ENCODE measurements at regions of chr19 and their contacts with region 1.

Region 1: DNA sequence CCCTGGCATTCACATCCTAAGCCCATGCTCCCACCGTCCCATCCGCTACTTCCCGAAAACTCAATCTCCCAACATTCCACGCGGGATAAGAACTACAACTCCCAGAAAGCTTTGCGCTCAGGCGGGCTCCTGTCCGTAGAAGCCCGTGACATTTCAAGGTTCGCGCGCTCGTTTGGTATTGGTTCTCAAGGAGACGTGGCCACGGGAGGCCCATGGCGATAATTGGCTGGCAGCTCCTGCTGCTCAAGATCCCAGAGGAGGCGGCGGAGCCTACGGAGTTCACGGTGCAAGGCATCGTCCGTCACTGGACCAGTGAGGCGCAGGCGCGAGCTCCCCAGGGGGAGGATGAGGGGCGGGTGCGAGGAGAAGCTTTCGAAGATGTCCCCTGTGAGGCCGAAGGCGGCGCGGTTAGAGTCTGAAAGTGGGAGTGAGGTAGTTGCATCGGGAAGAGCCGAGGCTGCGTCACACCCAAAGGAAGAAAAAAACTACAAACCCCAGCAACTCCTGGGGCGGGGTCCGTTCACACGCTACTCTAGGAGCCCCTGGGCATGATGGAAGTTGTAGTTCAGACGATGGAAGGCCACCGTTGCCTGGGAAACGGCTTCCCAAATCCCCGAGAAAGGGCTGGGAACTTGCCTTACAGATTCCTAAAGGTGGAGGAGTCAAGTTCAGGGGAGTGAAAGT is 1.2 kb upstream of the MAMSTR start:
- DNase-seq: peak; percentile 81
- ATAC-seq: peak; percentile 86
- H3K4me3 Mint-ChIP-seq: peak overlapping the region; percentile 95
- H3K27ac Mint-ChIP-seq: peak overlapping the region; percentile 92
- H3K4me1 Mint-ChIP-seq: peaks cover 24% of the 10 kb centered on the region
- H3K27me3 Mint-ChIP-seq: no peaks in the 10 kb centered on the region
- CTCF ChIP-seq: no peak

Region 2: GRCh38 chr19:48674921-48675824 is 45.6 kb before region 1 on chr19:
- CTCF ChIA-PET with region 1: no interaction called
- POLR2A ChIA-PET with region 1: no interaction called
- intact Hi-C with region 1: no loop called
- DNase-seq: peak; percentile 47
- ATAC-seq: peak; percentile 96
- H3K4me3 Mint-ChIP-seq: no peak overlapping the region
- H3K27ac Mint-ChIP-seq: no peak overlapping the region
- H3K4me1 Mint-ChIP-seq: peaks cover 7% of the 10 kb centered on the region
- H3K27me3 Mint-ChIP-seq: peaks cover 1% of the 10 kb centered on the region
- CTCF ChIP-seq: peak; percentile 65

Region 3: GRCh38 chr19:48738557-48739399 is 18.0 kb after region 1 on chr19:
- CTCF ChIA-PET with region 1: no interaction called
- POLR2A ChIA-PET with region 1: interaction called, 8 read pairs
- intact Hi-C with region 1: loop called (anchors 1 kb)
- DNase-seq: peak; percentile 86
- ATAC-seq: peak; percentile 94
- H3K4me3 Mint-ChIP-seq: peak overlapping the region; percentile 66
- H3K27ac Mint-ChIP-seq: peak overlapping the region; percentile 70
- H3K4me1 Mint-ChIP-seq: peaks cover 20% of the 10 kb centered on the region
- H3K27me3 Mint-ChIP-seq: peaks cover 8% of the 10 kb centered on the region
- CTCF ChIP-seq: no peak

Region 4: GRCh38 chr19:48842789-48843162 is 122.0 kb after region 1 on chr19:
- CTCF ChIA-PET with region 1: no interaction called
- POLR2A ChIA-PET with region 1: no interaction called
- intact Hi-C with region 1: no loop called
- DNase-seq: peak; percentile 27
- ATAC-seq: peak; percentile 71
- H3K4me3 Mint-ChIP-seq: no peak overlapping the region
- H3K27ac Mint-ChIP-seq: peak overlapping the region; percentile 15
- H3K4me1 Mint-ChIP-seq: peaks cover 5% of the 10 kb centered on the region
- H3K27me3 Mint-ChIP-seq: no peaks in the 10 kb centered on the region
- CTCF ChIP-seq: no peak